ENCODE measurements at regions of chr7 and their contacts with region 1.

Region 1: DNA sequence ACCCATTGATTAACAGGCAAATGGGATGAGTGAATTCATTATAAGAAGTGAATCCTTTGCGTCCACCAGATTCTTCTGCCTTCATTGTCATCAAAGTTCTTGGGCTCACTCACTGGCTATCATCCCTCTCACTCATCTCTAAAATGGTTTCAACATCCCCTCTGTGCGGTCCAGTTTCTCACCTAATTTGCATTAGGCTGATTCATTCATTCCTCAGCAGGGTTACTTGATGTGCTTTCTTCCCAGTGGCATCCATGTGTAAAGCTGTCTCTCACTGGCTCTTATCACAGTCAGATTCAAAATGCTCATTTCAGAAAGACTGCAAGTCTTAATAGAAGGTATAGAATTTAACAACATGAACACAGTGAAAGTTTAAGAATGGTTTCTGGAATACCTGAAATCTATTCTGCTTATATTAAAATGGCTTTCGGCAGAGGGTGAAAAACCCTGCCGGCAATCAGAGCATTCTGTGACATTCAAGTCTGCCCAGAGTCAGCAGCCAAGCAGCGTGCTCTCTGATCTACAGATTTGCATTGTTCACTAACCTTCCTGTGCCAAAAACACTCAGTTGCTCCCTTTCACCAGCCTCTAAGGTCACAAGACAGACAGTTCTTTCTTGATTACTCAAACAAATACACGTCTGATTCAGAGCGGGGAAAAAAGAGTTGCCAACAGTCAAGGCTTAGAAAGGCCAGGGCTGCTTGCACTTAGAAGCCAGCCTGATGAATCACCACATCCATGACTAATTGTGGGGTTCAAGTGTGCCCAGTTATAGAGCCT is 106.7 kb downstream of the TES start:
- DNase-seq: peak; percentile 22 to 41
- ATAC-seq: peak; percentile 73 to 98 (median 90)
- H3K4me3 ChIP-seq: no peak overlapping the region
- H3K27ac ChIP-seq: peak overlapping the region; percentile 27 to 81 (median 68)
- H3K4me1 ChIP-seq: peaks cover 0 to 30% (median 16%) of the 10 kb centered on the region in 9 donors
- H3K27me3 ChIP-seq: no peaks in the 10 kb centered on the region
- CTCF ChIP-seq: no peak

Region 2: DNA sequence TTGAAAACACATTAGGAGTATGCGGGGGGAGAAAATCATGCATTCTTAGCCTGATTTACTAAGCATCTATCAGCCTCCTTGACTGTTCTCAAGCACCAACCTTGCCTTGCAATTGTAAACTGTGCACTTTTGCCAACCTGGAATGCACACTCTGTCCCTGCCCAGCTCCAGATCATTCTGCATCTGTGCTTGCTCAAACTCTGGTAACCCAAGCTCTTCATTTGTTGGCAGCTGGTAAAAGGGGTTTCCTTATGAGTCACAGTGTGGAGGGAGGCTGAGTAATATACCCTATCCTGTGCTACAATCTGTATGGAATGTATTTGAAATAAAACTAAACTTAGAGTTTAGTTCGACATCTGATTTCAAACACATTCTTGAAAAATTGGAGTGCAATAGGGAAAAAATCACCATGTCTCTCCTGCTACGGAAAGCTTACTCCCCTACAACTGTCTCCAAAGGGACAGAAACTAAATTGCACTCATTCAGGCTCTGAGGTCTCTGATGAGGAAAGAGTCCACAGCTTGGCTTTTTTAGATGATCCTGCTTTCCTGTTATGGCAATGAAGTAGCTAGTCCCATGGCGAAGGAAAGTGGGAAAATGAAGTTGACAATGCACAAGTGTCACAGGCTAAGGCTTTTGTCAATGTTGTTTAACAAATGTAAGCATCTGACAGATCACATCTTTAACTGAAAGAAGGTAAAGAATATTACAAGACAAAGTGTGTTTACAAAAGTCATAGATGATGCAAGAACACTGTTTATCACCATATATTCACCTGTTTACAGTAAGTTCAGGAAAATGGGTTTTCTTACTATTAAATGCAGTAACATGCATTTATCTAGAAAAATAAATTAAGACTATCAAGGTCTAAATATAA is 44.8 kb before region 1 on chr7:
- intact Hi-C with region 1: loop called in 3 of 10 experiments (anchors 5 kb)
- DNase-seq: peak in 1 of 2 donors; percentile 59
- ATAC-seq: peak; percentile 83 to 99 (median 94)
- H3K4me3 ChIP-seq: no peak overlapping the region
- H3K27ac ChIP-seq: peak overlapping the region; percentile 19 to 77 (median 62)
- H3K4me1 ChIP-seq: peaks cover 9 to 43% (median 27%) of the 10 kb centered on the region in 9 donors
- H3K27me3 ChIP-seq: no peaks in the 10 kb centered on the region
- CTCF ChIP-seq: no peak

Region 3: DNA sequence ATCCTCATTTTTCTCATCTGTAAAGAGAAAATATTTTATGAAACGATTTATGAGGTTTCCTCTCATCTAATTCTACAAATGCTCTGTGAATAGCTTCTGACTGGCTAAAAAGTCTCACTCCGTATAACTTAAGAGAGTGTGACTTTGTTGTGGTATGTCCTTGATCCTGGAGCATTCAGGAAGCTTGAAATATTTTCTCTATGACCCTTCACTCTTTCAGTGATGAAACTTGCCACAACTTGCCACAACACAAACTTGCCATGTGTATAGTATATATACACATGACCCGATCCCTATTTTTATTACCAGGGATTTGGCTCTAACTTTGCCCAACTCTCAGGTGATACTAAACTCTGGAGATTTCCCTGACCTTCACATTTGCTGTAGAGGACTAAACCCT is 32.6 kb before region 1 on chr7:
- intact Hi-C with region 1: loop called in 3 of 10 experiments (anchors 5 kb)
- DNase-seq: no peak
- ATAC-seq: no peak
- H3K4me3 ChIP-seq: no peak overlapping the region
- H3K27ac ChIP-seq: no peak overlapping the region
- H3K4me1 ChIP-seq: peaks cover 0 to 16% (median 8%) of the 10 kb centered on the region in 9 donors
- H3K27me3 ChIP-seq: no peaks in the 10 kb centered on the region
- CTCF ChIP-seq: no peak

Region 4: GRCh38 chr7:116487907-116488521 is 171.0 kb after region 1 on chr7:
- intact Hi-C with region 1: loop called in 1 of 10 experiments (anchors 5 kb)
- DNase-seq: no peak
- ATAC-seq: no peak
- H3K4me3 ChIP-seq: no peak overlapping the region
- H3K27ac ChIP-seq: no peak overlapping the region
- H3K4me1 ChIP-seq: peaks cover 3 to 48% (median 28%) of the 10 kb centered on the region in 9 donors
- H3K27me3 ChIP-seq: no peaks in the 10 kb centered on the region
- CTCF ChIP-seq: no peak